Activated CD4-positive, alpha-beta memory T cell treated with anti-CD3 and anti-CD28 coated beads for 36 hours (primary cell): ENCODE measurements at regions of chr7 and their contacts with region 1.

Region 1: DNA sequence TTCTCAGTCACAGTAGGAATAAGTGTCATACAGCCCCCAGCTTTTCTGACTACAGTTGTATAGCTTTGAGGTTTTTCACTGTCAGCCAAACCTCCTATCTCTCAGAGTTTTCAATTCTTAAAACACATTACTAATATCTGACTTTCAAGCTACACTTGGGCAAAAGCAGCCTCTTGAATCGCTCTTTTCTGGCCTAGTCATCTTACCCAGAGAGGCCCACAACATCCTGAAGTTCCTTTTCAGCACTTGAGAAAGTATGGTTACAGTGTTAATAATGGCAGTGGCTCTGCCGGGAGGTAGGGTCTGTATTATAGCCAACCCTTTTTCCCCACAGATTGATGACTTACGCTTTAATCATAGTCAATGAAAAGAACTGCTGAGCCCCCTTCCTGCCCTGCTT is 181.0 kb downstream of the LRRC4 start:
- DNase-seq: peak; percentile 61
- H3K4me3 Mint-ChIP-seq: no peak overlapping the region
- H3K27ac Mint-ChIP-seq: peak overlapping the region; percentile 79
- H3K4me1 Mint-ChIP-seq: peaks cover 45% of the 10 kb centered on the region
- H3K27me3 Mint-ChIP-seq: no peaks in the 10 kb centered on the region

Region 2: DNA sequence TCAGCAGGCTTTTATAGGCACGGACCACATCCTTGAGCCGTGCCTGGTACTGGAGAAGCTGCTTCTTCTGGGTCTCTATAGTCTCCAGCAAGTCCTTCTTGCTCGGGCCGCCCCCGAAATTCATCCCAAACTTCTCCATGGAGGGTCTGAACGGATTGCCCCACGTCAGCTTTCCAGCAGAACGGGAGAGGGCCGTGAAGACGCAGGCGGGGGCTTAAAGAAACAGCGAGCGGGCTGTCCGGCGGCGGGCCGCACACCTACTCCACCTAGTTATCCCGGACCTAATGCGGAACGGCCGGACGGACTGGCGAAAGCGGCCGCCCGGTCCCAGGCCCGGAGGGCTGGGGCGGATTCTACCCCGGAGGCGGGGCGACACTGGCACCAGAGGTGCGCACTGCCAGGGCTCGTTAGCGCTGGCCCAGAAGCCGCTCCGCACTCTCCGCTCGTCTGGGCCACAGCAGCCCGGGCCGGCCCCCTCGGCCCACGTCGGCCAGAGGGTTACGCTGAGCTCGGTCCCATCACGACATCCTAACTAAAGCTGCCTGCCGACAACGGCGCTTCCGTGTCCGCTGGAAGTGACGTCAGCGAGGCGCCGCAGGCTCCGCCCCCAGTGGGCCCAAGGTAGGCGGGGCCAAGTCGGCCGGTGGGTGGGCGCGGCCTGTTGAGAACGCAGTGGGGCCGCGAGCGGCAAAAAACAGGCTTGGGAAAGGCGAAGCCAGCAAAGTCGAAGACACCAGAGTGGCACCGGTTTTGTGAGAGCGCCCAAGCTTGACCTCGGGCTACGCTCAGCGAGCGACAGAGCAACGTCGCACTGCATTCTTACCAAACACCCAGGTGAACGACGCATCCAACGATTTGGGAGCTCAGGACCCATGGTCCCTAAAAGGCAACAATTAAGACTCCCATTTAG is 264.9 kb before region 1 on chr7 and contains the start of gene GCC1:
- CTCF ChIA-PET with region 1: no interaction called
- POLR2A ChIA-PET with region 1: no interaction called
- intact Hi-C with region 1: loop called (anchors 1 kb)
- DNase-seq: peak; percentile 96
- H3K4me3 Mint-ChIP-seq: peak within 1 kb of the TSS; percentile 88
- H3K27ac Mint-ChIP-seq: peak within 1 kb of the TSS; percentile 64
- H3K4me1 Mint-ChIP-seq: peaks cover 69% of the 10 kb centered on the region
- H3K27me3 Mint-ChIP-seq: no peaks in the 10 kb centered on the region
- total RNA-seq, gene GCC1: 14.1 to 15.0 TPM

Region 3: GRCh38 chr7:127667017-127667670 is 183.1 kb before region 1 on chr7:
- CTCF ChIA-PET with region 1: interaction called, 3 read pairs
- POLR2A ChIA-PET with region 1: no interaction called
- intact Hi-C with region 1: loop called (anchors 1 kb)
- DNase-seq: no peak
- H3K4me3 Mint-ChIP-seq: peak overlapping the region; percentile 6
- H3K27ac Mint-ChIP-seq: peak overlapping the region; percentile 84
- H3K4me1 Mint-ChIP-seq: peaks cover 55% of the 10 kb centered on the region
- H3K27me3 Mint-ChIP-seq: no peaks in the 10 kb centered on the region

Region 4: GRCh38 chr7:127745445-127745844 is 104.8 kb before region 1 on chr7:
- CTCF ChIA-PET with region 1: no interaction called
- POLR2A ChIA-PET with region 1: no interaction called
- intact Hi-C with region 1: loop called (anchors 1 kb)
- DNase-seq: peak; percentile 11
- H3K4me3 Mint-ChIP-seq: no peak overlapping the region
- H3K27ac Mint-ChIP-seq: peak overlapping the region; percentile 57
- H3K4me1 Mint-ChIP-seq: peaks cover 58% of the 10 kb centered on the region
- H3K27me3 Mint-ChIP-seq: no peaks in the 10 kb centered on the region

Region 5: GRCh38 chr7:127897704-127898454 is 47.7 kb after region 1 on chr7:
- CTCF ChIA-PET with region 1: interaction called, 3 read pairs
- POLR2A ChIA-PET with region 1: interaction called, 16 read pairs
- intact Hi-C with region 1: loop called (anchors 1 kb)
- DNase-seq: peak; percentile 55
- H3K4me3 Mint-ChIP-seq: no peak overlapping the region
- H3K27ac Mint-ChIP-seq: no peak overlapping the region
- H3K4me1 Mint-ChIP-seq: peaks cover 12% of the 10 kb centered on the region
- H3K27me3 Mint-ChIP-seq: no peaks in the 10 kb centered on the region

Region 6: DNA sequence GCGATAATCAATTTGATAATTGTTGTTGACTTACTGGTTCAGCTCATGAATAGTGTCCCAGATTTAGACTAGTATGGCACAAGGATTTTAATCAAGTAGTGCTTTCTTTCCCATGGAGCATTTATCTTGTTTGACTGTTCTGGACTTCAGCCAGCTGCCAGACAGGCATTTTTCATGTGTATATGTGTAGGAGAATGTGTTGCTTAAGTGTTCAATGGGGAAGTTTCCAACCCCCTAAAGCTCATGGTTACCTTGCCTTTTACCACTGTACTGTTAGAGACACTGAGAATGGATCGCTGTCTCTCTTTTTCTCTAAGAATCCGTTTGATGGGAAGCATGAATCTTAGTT is 77.1 kb after region 1 on chr7:
- CTCF ChIA-PET with region 1: no interaction called
- POLR2A ChIA-PET with region 1: no interaction called
- intact Hi-C with region 1: loop called (anchors 1 kb)
- DNase-seq: no peak
- H3K4me3 Mint-ChIP-seq: no peak overlapping the region
- H3K27ac Mint-ChIP-seq: no peak overlapping the region
- H3K4me1 Mint-ChIP-seq: peaks cover 14% of the 10 kb centered on the region
- H3K27me3 Mint-ChIP-seq: no peaks in the 10 kb centered on the region